ENCODE measurements at regions of chr15 and their contacts with region 1.

Region 1: GRCh38 chr15:99566157-99566897 is 543 bp downstream of the MEF2A start:
- DNase-seq: no peak
- H3K4me3 ChIP-seq: peak overlapping the region; percentile 89
- CTCF ChIP-seq: no peak

Region 2: DNA sequence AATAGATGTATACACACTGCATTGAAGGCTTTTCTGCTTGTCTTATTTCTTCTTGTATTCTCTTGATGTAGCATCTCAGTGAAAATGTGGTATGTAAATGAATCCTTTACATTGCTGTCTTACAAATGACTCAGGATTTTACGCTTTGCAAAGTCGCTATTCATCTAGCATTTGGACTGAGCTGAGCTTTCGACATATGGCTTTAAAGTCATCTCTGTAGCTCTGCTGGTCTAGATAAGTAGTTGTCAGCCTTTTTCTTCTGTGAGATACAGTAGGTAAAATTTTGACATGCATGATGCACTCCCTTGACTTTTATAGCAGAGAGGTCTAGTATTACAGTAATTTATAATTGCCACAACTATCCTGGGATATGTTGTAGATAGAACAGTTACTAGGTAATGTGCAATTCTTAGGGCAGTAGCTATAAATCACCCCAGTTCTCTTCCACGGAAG is 16.2 kb after region 1 on chr15:
- CTCF ChIA-PET with region 1: interaction called, 11 read pairs
- POLR2A ChIA-PET with region 1: no interaction called
- DNase-seq: no peak
- H3K4me3 ChIP-seq: no peak overlapping the region
- CTCF ChIP-seq: no peak